Activated B cell treated with CpG ODN at 0.5 μM for 24 hours (primary cell): ENCODE measurements at regions of chr21 and their contacts with region 1.

Region 1: DNA sequence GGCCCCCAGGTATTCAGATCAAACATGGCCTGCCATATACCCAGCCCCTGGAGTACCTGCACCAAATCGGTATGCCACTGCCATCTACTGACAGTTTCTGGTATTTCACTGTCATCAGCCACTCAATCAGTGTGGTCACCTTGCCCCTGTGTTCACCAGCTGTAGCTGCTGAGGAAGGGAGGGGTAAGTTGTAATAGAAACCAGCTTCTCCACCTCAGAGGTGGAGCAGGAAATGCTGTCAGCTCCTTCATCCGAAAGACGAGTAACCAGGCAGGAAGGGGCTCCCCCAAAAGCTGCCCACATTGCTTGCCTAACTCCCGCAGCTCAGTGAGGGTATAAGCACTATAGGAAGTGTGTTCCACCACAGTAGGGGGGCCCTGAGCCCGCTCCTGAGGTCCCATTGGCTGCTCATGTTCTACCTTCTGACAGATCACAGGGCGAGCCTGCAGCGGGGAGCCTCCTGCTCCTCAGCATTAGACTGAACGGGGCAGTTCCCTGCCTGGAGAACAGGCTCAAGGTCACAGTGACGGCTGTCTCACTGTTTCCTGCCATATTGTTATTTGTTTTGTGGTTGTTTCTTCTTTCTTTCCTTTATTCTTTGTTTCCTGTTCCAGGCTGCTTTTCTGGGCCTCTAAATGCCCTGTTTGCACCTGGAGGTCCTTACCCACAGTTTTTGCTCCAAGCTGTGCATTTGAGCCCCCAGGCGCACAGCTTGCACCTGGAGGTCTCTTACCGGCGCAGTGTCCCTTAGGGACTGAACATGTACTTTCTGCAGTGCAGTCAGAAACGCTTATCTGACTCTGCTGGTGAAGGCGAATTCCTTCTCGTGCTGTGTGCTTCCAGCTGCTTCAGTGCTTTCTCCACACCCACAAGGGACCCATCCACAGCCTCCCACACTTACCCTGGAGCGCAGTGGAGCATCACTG is 1638.3 kb downstream of the MRPL39 start:
- DNase-seq: peak; percentile 51
- ATAC-seq: peak; percentile 92
- H3K4me3 Mint-ChIP-seq: peak overlapping the region; percentile 76
- H3K27ac Mint-ChIP-seq: peak overlapping the region; percentile 81
- H3K4me1 Mint-ChIP-seq: peaks cover 18% of the 10 kb centered on the region
- H3K27me3 Mint-ChIP-seq: no peaks in the 10 kb centered on the region
- CTCF ChIP-seq: no peak

Region 2: GRCh38 chr21:22791986-22792560 is 1176.9 kb before region 1 on chr21:
- CTCF ChIA-PET with region 1: no interaction called
- POLR2A ChIA-PET with region 1: no interaction called
- intact Hi-C with region 1: loop called (anchors 1 kb)
- DNase-seq: no peak
- ATAC-seq: no peak
- H3K4me3 Mint-ChIP-seq: no peak overlapping the region
- H3K27ac Mint-ChIP-seq: no peak overlapping the region
- H3K4me1 Mint-ChIP-seq: no peaks in the 10 kb centered on the region
- H3K27me3 Mint-ChIP-seq: no peaks in the 10 kb centered on the region
- CTCF ChIP-seq: peak; percentile 94

Region 3: DNA sequence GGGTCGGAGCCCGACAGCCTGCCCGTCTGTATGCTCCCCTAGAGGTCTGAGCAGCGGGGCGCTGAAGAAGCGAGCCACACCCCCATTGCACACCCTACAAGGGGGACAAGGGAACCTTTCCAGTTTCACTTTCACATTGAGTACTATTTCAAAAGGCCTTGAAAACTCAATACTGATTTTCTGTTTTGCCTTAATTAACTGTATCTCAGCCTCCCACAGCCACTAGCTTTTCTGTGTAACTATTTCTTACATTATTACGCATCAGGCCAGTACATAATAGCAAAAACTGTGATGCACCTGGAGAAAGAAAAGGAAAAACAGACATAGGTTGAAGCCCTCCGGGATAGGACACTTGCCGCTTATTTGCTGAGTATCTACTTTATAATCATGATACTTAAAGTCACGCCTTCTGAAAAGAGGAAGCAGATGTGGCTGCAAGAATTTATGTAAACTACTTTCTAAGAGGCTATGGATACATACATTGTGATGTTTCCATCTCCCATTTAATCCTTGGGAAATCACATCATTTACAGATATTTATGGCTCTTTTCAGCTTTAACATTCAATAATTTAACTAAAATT is 81.2 kb before region 1 on chr21:
- CTCF ChIA-PET with region 1: no interaction called
- POLR2A ChIA-PET with region 1: no interaction called
- intact Hi-C with region 1: loop called (anchors 1 kb)
- DNase-seq: peak; percentile 37
- ATAC-seq: peak; percentile 90
- H3K4me3 Mint-ChIP-seq: peak overlapping the region; percentile 86
- H3K27ac Mint-ChIP-seq: peak overlapping the region; percentile 92
- H3K4me1 Mint-ChIP-seq: peaks cover 15% of the 10 kb centered on the region
- H3K27me3 Mint-ChIP-seq: no peaks in the 10 kb centered on the region
- CTCF ChIP-seq: no peak

Region 4: DNA sequence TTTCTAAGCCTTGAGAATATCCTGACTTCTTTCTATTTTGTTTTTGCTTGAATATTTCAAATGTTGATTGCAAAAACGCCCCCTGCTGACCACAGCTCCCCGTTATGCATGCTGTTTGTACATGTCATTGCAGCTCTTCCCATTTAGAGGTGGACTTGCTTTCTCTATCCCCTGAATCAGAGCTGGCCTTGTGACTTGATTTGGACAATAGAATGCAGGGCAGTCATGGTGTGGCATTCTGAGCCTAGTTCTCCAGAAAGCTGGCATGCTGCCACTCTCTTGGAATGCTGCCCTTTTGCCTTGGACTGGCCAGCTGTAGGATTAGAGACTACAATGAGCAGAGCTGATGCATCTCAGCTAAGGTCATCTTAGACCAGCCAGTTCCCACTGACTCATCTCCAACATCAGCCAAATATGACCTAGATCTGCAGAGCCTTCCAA is 76.8 kb after region 1 on chr21:
- CTCF ChIA-PET with region 1: interaction called, 5 read pairs
- POLR2A ChIA-PET with region 1: no interaction called
- intact Hi-C with region 1: loop called (anchors 2 kb)
- DNase-seq: no peak
- ATAC-seq: no peak
- H3K4me3 Mint-ChIP-seq: peak overlapping the region; percentile 25
- H3K27ac Mint-ChIP-seq: peak overlapping the region; percentile 31
- H3K4me1 Mint-ChIP-seq: peaks cover 64% of the 10 kb centered on the region
- H3K27me3 Mint-ChIP-seq: no peaks in the 10 kb centered on the region
- CTCF ChIP-seq: no peak

Region 5: DNA sequence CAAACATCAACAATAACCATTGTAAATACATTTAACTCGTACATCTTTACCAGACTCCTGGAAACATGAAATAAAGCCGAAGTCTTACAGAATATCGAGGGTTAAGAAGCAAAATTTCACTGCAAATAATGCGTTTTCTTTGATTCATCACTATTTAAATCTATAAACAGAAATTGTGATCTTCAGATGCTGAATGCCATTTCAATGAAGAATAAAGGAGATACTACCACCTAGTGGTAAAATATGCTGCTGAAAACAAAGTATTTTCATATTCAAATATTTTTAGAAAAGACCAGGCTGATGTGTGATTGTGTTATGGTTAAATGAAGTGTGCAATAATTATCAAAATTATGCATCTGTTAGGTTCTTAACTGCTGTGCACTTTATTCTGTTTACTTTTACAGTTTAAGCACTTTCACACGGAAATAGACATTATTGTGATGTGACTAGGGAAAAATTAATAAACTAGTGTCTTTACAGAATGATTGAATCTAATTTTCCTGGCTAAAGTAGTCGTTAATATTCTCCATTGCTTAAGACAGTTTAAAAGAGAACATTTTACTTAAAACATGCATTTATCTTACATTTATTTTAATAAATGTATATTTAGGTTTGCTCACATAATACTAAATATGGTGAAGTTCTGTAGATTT is 545.2 kb after region 1 on chr21:
- CTCF ChIA-PET with region 1: no interaction called
- POLR2A ChIA-PET with region 1: no interaction called
- intact Hi-C with region 1: loop called (anchors 1 kb)
- DNase-seq: no peak
- ATAC-seq: no peak
- H3K4me3 Mint-ChIP-seq: no peak overlapping the region
- H3K27ac Mint-ChIP-seq: no peak overlapping the region
- H3K4me1 Mint-ChIP-seq: no peaks in the 10 kb centered on the region
- H3K27me3 Mint-ChIP-seq: no peaks in the 10 kb centered on the region
- CTCF ChIP-seq: no peak

Region 6: GRCh38 chr21:25039461-25040380 is 1070.7 kb after region 1 on chr21:
- CTCF ChIA-PET with region 1: no interaction called
- POLR2A ChIA-PET with region 1: no interaction called
- intact Hi-C with region 1: loop called (anchors 2 kb)
- DNase-seq: no peak
- ATAC-seq: peak; percentile 64
- H3K4me3 Mint-ChIP-seq: peak overlapping the region; percentile 74
- H3K27ac Mint-ChIP-seq: peak overlapping the region; percentile 80
- H3K4me1 Mint-ChIP-seq: peaks cover 35% of the 10 kb centered on the region
- H3K27me3 Mint-ChIP-seq: no peaks in the 10 kb centered on the region
- CTCF ChIP-seq: no peak

Region 7: GRCh38 chr21:25313829-25314228 is 1344.8 kb after region 1 on chr21:
- CTCF ChIA-PET with region 1: interaction called, 3 read pairs
- POLR2A ChIA-PET with region 1: no interaction called
- intact Hi-C with region 1: loop called (anchors 5 kb)
- DNase-seq: no peak
- ATAC-seq: peak; percentile 40
- H3K4me3 Mint-ChIP-seq: peak overlapping the region; percentile 62
- H3K27ac Mint-ChIP-seq: peak overlapping the region; percentile 31
- H3K4me1 Mint-ChIP-seq: peaks cover 11% of the 10 kb centered on the region
- H3K27me3 Mint-ChIP-seq: no peaks in the 10 kb centered on the region
- CTCF ChIP-seq: peak; percentile 32